H1 (cell line): ENCODE measurements at regions of chr10 and their contacts with region 1.

Region 1: DNA sequence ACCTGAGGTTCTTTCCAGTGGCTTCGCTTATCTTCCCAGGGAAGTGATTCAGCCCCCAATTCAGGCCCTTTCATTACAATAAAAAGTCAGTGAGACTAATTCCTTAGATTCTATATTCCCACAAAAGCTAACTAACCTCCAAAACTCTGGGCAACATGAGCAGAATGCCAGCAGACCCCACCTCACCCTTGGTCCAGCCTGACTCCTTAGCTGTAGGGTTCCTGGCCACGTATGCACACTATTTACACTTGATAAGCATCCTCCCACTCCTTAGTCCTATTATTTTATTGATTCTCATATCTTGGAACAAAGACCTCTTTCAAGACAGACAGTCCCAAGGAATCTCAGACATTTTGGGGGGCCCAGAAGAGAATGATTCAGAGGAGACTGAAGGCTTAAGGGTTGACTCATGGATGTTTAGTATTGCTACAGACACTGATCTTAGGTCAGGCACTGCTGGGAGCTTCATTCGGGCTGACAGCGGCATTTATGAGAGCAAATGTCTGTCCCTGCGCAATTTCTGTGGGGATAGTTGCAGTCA is 162.6 kb upstream of the GDF10 start:
- DNase-seq: no peak
- H3K4me3 ChIP-seq: no peak overlapping the region
- H3K27ac ChIP-seq: no peak overlapping the region
- H3K4me1 ChIP-seq: no peaks in the 10 kb centered on the region
- H3K27me3 ChIP-seq: no peaks in the 10 kb centered on the region
- CTCF ChIP-seq: no peak
- EP300 ChIP-seq: no peak
- POLR2A ChIP-seq: no peak
- RAD21 ChIP-seq: no peak

Region 2: DNA sequence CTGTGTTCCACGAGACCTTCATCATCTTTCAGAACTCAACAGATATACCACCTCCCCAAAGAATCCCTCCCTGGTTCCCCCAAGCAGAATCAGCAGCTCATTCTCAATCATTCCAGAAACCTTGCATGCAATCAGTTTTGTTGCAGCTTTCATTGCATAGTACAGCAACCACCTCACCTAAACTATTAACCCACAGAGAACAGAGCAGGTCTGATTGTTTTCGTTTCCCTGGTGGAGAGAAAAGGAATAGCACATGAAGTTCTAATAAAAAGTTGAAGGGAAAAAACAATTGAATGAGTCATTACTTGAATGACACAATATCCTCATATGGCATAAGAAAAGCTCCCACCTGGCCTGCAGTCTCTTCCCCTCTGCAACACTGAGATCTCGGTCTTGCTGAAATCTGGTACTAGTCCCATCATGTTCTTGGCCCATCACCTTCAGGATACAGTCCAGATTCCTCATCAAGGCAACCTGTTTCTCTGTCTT is 15.5 kb after region 1 on chr10:
- CTCF ChIA-PET with region 1: interaction called, 26 read pairs
- POLR2A ChIA-PET with region 1: no interaction called
- DNase-seq: no peak
- H3K4me3 ChIP-seq: no peak overlapping the region
- H3K27ac ChIP-seq: no peak overlapping the region
- H3K4me1 ChIP-seq: 0 out of 7 replicates have a peak, but pooled peaks cover 0 to 3% (median 0%) of the 10 kb centered on the region in 4 experiments
- H3K27me3 ChIP-seq: no peaks in the 10 kb centered on the region
- CTCF ChIP-seq: peak in 1 of 3 experiments; percentile 43; a peak in 1 of 4 replicates
- EP300 ChIP-seq: no peak
- POLR2A ChIP-seq: no peak
- RAD21 ChIP-seq: 0 out of 4 replicates have a peak, but pooled peaks of 1 of the 2 experiments have one; percentile 10

Region 3: GRCh38 chr10:47176903-47177868 is 39.8 kb after region 1 on chr10:
- CTCF ChIA-PET with region 1: no interaction called
- POLR2A ChIA-PET with region 1: no interaction called
- DNase-seq: no peak
- H3K4me3 ChIP-seq: no peak overlapping the region
- H3K27ac ChIP-seq: no peak overlapping the region
- H3K4me1 ChIP-seq: peaks cover 0 to 2% (median 2%) of the 10 kb centered on the region in 4 experiments; a peak in 2 of 7 replicates
- H3K27me3 ChIP-seq: no peaks in the 10 kb centered on the region
- CTCF ChIP-seq: no peak
- EP300 ChIP-seq: no peak
- POLR2A ChIP-seq: no peak
- RAD21 ChIP-seq: no peak